ENCODE measurements at regions of chr5 and their contacts with region 1.

Region 1: DNA sequence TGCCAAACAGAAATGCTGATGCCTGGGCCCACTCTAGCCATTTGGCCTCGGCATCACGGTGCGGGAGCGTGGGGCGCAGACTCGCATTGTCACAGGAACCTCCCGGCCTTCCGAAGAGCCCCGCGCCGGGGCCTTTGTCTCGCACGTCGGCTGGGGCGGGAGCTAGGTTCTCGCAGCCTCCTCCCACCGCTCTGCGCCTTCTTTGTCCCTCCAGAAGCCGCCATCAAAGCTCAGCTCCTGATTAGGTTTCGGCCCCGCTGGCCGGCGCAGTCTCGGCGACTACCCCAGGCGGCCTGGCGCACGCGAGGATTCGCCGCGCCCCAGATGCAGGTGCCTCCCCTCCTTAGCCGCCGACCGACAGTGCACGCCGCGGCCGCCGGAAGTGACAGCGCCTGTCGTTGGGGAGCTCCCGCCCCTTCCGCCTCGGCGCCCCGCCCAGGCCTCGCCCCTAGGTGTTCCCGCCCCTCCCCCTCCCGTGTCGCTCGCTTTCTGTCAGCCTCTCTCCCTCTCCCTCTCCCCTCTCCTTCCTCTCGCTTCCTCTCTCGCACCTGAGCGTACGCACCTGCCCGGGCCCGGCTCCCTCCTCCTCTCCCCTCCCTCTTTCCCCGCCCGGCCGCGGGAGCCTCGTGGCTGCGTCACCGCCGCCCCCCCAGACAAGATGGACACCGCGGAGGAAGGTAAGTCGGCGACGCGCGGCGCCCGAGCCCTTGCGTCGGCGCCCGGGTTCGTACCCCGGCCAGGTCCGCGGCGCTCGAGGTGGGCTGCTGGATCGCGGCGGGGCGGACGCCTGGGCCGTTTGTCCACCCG is at the start of gene MARCHF6:
- DNase-seq: peak; percentile 83

Region 2: DNA sequence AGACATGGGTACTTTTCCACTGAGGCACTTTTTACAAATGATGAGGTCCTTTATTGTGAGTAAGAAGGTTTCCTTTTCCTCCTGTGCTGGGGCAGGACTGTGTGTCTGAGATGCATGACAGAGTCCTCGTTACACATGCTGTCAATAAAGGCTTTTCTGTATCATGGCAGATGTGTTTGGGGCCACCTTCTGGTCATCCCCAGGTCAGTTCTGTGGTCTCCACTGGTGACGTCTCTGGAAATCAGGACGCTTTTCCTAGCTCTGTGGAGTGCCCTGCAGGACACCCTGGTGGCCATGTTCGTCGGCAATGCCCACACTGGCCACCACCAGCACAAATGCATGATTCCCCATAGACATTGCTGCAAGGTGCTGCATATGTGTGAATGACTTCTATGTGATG is 48.5 kb before region 1 on chr5:
- CTCF ChIA-PET with region 1: no interaction called
- POLR2A ChIA-PET with region 1: interaction called, 13 read pairs
- DNase-seq: no peak

Region 3: GRCh38 chr5:10317825-10318682 is 35.4 kb before region 1 on chr5:
- CTCF ChIA-PET with region 1: no interaction called
- POLR2A ChIA-PET with region 1: interaction called, 18 read pairs
- DNase-seq: no peak

Region 4: GRCh38 chr5:10339058-10339811 is 14.2 kb before region 1 on chr5:
- CTCF ChIA-PET with region 1: interaction called, 3 read pairs
- POLR2A ChIA-PET with region 1: interaction called, 19 read pairs
- DNase-seq: no peak

Region 5: DNA sequence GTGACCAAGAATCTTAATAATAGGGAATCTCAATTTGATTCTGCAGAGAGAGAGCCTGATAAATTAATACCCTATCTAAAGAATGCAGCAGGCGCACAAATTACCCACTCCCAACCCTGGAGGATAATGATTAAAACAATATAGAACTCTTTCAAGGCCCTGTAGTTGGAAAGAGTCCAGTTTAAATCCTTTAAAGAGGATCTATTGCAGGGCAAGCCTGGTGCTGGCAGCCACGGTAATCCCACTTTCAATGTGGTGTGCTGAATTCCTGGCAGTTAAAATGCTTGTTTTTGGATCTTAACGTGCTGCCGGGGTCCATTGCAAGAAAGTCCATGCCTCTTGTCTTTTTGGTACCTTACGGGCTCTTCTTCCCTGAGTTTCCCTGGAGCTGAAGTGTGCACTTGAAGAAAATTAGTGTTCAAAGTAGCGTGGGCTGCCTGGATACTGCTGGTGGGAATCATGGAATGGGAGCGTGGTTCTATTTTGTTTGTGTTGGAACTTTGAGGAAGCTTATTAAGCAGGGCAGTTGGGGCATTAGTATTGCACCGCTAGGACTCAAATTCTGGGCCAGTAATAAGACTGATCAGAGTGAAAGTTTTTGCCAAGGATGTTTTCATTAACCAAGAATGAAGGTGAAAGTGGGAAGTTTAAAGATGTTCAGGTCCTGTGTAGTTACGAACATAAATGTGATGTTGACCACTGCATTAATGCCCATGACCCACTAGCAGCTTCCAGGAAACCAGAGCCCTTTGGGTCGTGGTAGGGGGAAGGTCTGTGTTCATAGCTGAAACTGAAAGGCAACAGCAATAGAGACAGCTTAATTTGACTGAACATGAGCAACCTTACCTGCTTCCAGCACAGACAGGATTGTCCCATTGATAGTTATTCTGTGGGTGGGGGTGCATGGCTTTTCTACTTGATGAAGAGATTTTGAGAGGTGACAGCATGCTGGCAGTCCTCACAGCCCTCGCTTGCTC is 20.9 kb after region 1 on chr5:
- CTCF ChIA-PET with region 1: no interaction called
- POLR2A ChIA-PET with region 1: interaction called, 11 read pairs
- DNase-seq: no peak